Mucosa of descending colon (tissue), 3 donors: ENCODE measurements at regions of chr12 and their contacts with region 1.

Region 1: GRCh38 chr12:107983756-107984472 is 145.2 kb upstream of the WSCD2 start:
- DNase-seq: no peak
- ATAC-seq: no peak
- H3K4me3 ChIP-seq: no peak overlapping the region
- H3K4me1 ChIP-seq: no peaks in the 10 kb centered on the region
- CTCF ChIP-seq: no peak

Region 2: GRCh38 chr12:108193917-108194316 is 210.0 kb after region 1 on chr12:
- intact Hi-C with region 1: loop called in 1 of 2 experiments (anchors 10 kb)
- DNase-seq: peak in 1 of 3 donors; percentile 44
- ATAC-seq: no peak
- H3K4me3 ChIP-seq: no peak overlapping the region
- H3K4me1 ChIP-seq: no peaks in the 10 kb centered on the region
- CTCF ChIP-seq: no peak